Activated naive CD4-positive, alpha-beta T cell treated with anti-CD3 and anti-CD28 coated beads, Interleukin-2, amount 10 ng/mL, durations not matched to agents 7 days and 5 days (primary cell): ENCODE measurements at regions of chr14 and their contacts with region 1.

Region 1: DNA sequence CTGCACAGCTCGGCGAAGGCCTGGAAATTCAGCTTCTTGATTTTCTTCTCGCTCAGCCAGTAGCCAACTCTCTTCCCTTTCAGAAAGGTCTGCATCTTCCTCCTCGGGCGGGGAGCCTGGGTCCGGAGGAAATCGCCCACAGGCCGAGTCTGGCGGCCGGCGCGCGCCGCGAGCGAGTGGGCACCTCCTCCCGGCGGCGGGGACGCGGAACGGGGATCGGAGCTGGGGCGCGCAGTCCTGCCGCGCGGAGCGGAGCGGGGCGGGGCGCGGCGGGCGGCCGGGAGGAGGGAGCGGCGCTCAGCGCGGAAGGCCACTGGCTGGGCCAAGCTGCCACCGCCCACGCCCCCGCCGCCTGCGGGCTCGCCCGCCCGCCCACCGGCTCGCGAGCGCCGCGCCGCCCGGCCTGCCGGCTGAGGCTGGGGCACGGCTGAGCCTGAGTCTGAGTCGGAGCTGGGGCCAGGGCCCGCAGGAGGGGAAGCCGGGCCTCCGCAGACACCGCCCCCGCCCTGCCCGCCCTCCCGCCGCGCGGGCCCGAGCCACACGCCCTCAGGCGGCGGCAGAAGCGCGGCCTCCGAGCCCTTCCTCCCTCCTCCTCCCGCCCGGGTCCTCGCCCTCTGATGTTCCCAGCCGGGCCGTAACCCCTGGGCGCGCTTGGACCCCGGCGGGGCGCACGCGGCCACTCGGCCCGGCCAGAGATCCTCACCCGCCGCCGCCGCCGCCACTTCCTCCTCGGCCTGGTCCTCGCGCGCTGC is 480 bp downstream of the ITPK1 start:
- DNase-seq: peak; percentile 88
- H3K4me3 Mint-ChIP-seq: peak overlapping the region; percentile 86
- H3K27ac Mint-ChIP-seq: peak overlapping the region; percentile 77
- H3K4me1 Mint-ChIP-seq: peaks cover 43% of the 10 kb centered on the region
- H3K27me3 Mint-ChIP-seq: peaks cover 6% of the 10 kb centered on the region

Region 2: GRCh38 chr14:92951912-92952471 is 163.3 kb before region 1 on chr14:
- CTCF ChIA-PET with region 1: interaction called, 23 read pairs
- DNase-seq: peak; percentile 87
- H3K4me3 Mint-ChIP-seq: no peak overlapping the region
- H3K27ac Mint-ChIP-seq: no peak overlapping the region
- H3K4me1 Mint-ChIP-seq: peaks cover 3% of the 10 kb centered on the region
- H3K27me3 Mint-ChIP-seq: no peaks in the 10 kb centered on the region

Region 3: DNA sequence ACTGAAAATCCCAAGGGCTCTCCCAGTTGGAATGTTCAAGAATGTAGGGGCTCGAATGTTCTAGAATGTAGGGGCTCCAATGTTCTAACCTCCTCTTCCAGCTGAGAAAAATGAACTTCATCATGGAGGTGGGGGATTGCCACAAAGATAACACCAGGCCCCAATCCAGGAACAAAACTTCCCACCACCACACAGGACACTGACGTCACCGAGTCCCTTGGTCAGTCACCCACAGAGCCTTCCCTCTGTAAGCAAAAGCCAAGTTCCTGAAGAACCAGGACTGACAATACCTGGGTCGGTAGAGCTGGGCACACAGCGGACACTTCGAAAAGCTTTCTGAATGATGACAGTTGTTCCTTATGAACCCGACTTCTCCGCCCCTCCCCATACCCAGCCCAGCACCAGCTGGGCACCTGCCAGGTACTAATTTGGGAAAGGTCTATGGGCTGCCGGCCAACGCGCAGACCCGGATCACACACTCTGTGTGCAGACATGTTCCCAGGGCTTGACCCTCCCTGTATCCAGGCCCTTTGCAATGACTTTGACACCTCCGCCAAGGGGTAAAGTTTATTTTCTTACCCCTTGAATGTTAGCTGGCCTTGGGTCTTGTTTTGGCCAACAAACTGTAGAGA is 18.4 kb before region 1 on chr14:
- CTCF ChIA-PET with region 1: interaction called, 16 read pairs
- DNase-seq: no peak
- H3K4me3 Mint-ChIP-seq: no peak overlapping the region
- H3K27ac Mint-ChIP-seq: peak overlapping the region; percentile 51
- H3K4me1 Mint-ChIP-seq: peaks cover 19% of the 10 kb centered on the region
- H3K27me3 Mint-ChIP-seq: no peaks in the 10 kb centered on the region

Region 4: GRCh38 chr14:93132470-93133065 is 17.3 kb after region 1 on chr14:
- CTCF ChIA-PET with region 1: interaction called, 85 read pairs
- DNase-seq: peak; percentile 56
- H3K4me3 Mint-ChIP-seq: no peak overlapping the region
- H3K27ac Mint-ChIP-seq: no peak overlapping the region
- H3K4me1 Mint-ChIP-seq: no peaks in the 10 kb centered on the region
- H3K27me3 Mint-ChIP-seq: peaks cover 25% of the 10 kb centered on the region

Region 5: DNA sequence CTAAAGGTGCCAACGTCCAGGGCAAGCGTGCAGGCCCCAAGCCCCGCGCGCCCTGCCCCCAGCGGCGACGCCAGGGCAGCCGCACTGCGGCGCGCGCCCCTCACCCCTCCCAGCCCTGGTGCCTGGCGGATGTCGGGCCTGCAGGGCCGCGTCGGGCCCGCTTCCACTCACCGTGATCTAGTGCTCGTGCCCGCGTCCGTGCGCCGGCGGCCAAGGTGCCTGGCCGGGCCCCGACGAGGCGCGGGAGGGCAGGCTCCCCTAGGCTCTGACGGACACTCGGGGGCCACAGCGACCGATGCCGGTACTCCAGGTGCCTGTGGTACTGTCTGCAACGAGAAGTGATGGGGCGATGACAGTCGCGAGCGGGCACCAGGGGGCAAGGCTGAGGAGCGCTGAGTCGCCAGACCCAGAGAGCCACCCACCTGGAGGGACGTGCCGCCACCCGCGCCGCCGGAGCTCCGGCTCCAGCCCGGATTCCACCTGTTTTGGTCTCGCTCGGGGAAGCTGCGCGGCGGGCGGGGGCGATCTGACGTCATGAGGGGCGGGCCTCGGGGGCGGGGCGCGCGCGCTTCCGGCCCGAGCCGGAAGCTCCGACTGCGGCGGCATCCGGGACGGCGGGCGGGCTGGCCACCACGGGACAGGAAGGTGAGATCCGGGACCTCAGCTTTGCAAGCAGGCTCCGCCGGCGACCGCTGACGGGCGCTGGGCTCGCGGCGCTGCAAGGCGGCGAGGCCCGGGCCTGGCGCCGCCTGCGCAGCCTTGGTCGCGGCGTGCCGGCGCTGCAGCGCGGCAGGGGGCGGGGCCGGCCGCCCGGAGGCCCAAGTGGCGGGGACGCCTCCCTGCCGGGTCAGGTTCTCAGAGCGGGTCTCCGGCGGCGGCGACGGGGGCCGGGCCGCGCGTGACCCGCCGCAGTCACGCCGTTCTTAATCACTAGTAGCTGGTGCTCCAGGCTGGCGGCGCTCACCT is 69.4 kb after region 1 on chr14 and contains the starts of genes LYSET and MOAP1:
- CTCF ChIA-PET with region 1: interaction called, 14 read pairs
- DNase-seq: peak; percentile 95
- H3K4me3 Mint-ChIP-seq: peak within 1 kb of the TSS; percentile 96
- H3K27ac Mint-ChIP-seq: peak within 1 kb of the TSS; percentile 94
- H3K4me1 Mint-ChIP-seq: peaks cover 38% of the 10 kb centered on the region
- H3K27me3 Mint-ChIP-seq: no peaks in the 10 kb centered on the region

Region 6: DNA sequence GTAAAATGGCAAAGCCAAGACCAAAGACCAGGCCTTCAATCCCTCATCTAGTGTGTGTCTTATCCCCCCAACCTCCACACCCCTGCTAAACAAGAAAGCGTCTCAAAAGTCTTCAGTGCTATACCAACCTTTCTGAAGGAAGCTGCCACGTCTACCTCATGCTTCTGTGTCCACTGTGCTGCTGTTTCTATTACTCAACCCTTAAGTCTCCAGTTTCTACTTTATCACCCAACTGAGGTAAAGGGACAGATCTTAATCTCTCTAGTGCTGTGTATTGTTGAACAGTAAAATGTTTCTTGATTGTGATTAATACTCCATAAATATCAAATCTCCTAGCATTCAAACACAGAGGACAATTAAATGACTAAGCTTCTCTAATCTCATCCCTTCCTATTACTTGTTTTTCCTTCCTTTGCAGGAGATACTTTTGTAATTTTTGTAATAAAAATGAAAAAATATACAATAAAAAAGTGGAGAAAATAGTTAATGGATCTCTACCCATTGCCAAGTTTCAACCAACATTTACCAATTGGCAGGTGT is 194.3 kb after region 1 on chr14:
- CTCF ChIA-PET with region 1: no interaction called
- DNase-seq: no peak
- H3K4me3 Mint-ChIP-seq: no peak overlapping the region
- H3K27ac Mint-ChIP-seq: no peak overlapping the region
- H3K4me1 Mint-ChIP-seq: no peaks in the 10 kb centered on the region
- H3K27me3 Mint-ChIP-seq: no peaks in the 10 kb centered on the region